Left cardiac atrium (tissue), 4 donors: ENCODE measurements at regions of chr12 and their contacts with region 1.

Region 1: GRCh38 chr12:62603061-62603810 is 136.6 kb downstream of the MON2 start:
- DNase-seq: peak; percentile 90
- ATAC-seq: peak; percentile 94 to 95

Region 2: GRCh38 chr12:62793256-62794217 is 190.3 kb after region 1 on chr12:
- intact Hi-C with region 1: loop called in 1 of 2 experiments (anchors 2 kb)
- DNase-seq: peak; percentile 85
- ATAC-seq: peak; percentile 78 to 80